ENCODE measurements at regions of chr1 and their contacts with region 1.

Region 1: GRCh38 chr1:27234049-27234882 is at the start of gene WDTC1:
- DNase-seq: peak; percentile 99
- ATAC-seq: peak; percentile 95
- H3K4me3 Mint-ChIP-seq: peak within 1 kb of the TSS; percentile 95
- H3K27ac Mint-ChIP-seq: peak within 1 kb of the TSS; percentile 93
- H3K4me1 Mint-ChIP-seq: peaks cover 27% of the 10 kb centered on the region
- H3K27me3 Mint-ChIP-seq: no peaks in the 10 kb centered on the region
- total RNA-seq, gene WDTC1: 19.3 to 21.9 TPM

Region 2: DNA sequence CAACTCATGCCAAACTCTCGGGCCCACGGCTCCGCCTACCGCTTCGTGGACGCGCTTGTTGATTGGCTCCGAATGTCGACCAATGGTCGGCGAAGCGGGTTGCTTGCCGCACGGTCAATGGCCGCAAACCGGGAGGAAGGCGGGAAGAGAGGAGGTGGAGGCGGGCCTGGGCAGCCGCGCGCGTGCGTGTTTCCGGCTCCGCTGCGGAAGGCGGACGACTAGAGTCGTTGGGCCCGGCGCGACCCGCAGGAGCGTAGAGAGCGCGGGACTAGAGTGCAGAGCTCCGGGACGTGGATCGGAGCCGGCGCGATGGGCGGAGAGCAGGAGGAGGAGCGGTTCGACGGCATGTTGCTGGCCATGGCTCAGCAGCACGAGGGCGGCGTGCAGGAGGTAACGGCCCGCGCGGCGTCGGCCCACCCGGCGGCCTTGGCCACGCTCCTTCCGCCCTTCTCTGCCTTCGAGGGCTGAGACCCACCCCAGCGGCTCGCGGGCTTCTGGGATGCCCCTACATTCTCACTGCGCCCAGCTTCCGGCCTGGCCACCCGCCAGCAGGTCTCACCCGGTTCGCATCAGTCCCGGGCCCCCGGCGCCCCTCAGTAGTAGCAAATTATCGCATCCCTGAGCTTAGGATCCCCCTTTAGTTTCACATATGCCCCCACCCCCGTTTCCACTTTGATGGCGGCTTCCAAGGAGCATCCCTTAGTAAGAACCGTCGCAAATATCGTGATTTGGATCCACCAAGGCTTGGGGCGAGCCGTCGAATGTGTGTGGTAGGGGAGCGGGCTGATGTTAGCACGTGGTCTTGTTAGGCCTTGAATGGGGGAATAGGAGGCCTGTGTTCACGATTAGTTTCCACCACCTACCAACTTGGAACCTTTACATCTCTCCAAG is 312.5 kb before region 1 on chr1 and contains the start of gene NUDC:
- CTCF ChIA-PET with region 1: no interaction called
- POLR2A ChIA-PET with region 1: no interaction called
- intact Hi-C with region 1: loop called in 1 of 2 experiments (anchors 1 kb)
- DNase-seq: peak; percentile 98
- ATAC-seq: peak; percentile 98
- H3K4me3 Mint-ChIP-seq: peak within 1 kb of the TSS; percentile 82
- H3K27ac Mint-ChIP-seq: peak within 1 kb of the TSS; percentile 90
- H3K4me1 Mint-ChIP-seq: peaks cover 38% of the 10 kb centered on the region
- H3K27me3 Mint-ChIP-seq: no peaks in the 10 kb centered on the region
- total RNA-seq, gene NUDC: 95.9 to 101 TPM

Region 3: DNA sequence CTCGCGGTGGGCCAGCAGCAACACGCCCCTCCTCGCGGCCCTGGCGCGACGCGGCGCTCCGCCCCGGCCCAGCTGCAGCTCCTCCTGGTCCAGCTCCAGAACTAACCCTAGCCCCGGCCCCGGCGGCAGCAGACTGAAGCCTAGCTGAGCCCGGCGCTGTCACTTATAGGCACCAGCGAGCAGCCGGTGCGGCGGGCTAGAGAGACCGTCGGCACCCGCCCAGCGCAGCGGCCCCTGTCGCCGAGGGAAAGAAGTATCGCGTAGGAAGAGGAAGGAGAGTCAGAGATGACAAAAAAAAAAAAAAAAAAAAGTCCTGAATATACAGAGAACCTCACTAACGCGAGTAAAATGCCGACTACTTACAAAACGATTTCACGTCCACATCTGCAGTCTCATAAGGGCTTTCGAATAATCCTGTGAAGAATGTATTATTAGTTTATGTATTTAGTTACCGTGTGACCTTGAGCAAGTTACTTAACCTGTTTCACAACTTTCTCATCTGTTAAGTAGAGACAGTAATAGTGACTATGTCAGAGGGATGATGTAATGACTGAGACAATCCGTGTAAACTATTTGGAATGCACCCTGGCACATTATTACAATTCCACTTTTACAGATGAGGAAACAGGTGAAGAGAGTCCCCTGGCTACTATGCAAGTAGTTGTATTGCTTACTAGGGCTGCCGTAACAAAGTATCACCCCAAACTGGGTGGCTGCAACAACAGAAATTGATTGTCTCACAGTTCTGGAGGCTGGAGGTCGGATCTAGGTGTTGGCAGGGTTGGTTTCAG is 79.1 kb before region 1 on chr1 and contains the start of gene SLC9A1:
- CTCF ChIA-PET with region 1: no interaction called
- POLR2A ChIA-PET with region 1: no interaction called
- intact Hi-C with region 1: loop called (anchors 1 to 2 kb)
- DNase-seq: peak; percentile 95
- ATAC-seq: peak; percentile 90
- H3K4me3 Mint-ChIP-seq: peak within 1 kb of the TSS; percentile 81
- H3K27ac Mint-ChIP-seq: peak within 1 kb of the TSS; percentile 97
- H3K4me1 Mint-ChIP-seq: peaks cover 42% of the 10 kb centered on the region
- H3K27me3 Mint-ChIP-seq: no peaks in the 10 kb centered on the region
- total RNA-seq, gene SLC9A1: 15.6 to 20.4 TPM

Region 4: DNA sequence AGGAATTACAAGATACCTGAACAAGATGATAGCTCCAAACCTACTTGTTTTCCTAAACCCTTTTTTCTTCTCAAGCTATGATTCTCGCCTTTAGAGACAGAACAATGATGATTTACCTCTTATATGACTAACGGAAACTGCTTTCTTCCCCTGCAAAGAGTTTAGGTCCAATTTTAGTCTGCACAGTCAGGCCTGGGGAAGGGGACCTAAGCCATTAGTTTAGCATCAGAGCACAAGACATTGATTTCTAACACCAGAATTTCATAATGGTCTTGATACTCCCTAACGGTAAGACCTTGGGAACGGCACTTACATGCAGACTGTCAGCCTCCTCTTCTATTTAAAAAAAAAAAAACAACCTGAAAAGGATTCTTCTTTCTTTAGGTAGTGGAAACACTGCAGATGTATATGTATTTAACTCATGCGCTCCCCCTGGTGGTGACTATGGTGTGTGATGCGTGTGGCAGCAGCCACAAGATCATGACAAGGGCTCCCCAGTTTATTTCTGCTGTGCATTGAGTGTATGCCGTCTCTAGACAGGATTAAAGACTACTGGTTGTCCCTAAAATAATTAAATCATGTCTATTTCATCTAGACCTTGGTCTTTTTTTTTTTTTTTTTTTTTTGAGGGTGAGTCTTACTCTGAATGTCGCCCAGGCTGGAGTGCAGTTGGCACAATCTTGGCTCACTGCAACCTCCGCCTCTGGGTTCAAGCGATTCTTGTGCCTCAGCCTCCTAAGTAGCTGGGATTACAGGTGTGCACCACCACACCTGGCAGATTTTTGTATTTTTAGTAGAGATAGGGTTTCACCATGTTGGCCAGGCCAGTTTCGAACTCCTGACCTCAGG is 50.4 kb after region 1 on chr1:
- CTCF ChIA-PET with region 1: interaction called, 9 read pairs
- POLR2A ChIA-PET with region 1: interaction called, 4 read pairs
- intact Hi-C with region 1: loop called (anchors 1 to 5 kb)
- DNase-seq: peak; percentile 95
- ATAC-seq: peak; percentile 93
- H3K4me3 Mint-ChIP-seq: no peak overlapping the region
- H3K27ac Mint-ChIP-seq: peak overlapping the region; percentile 37
- H3K4me1 Mint-ChIP-seq: peaks cover 2% of the 10 kb centered on the region
- H3K27me3 Mint-ChIP-seq: no peaks in the 10 kb centered on the region

Region 5: DNA sequence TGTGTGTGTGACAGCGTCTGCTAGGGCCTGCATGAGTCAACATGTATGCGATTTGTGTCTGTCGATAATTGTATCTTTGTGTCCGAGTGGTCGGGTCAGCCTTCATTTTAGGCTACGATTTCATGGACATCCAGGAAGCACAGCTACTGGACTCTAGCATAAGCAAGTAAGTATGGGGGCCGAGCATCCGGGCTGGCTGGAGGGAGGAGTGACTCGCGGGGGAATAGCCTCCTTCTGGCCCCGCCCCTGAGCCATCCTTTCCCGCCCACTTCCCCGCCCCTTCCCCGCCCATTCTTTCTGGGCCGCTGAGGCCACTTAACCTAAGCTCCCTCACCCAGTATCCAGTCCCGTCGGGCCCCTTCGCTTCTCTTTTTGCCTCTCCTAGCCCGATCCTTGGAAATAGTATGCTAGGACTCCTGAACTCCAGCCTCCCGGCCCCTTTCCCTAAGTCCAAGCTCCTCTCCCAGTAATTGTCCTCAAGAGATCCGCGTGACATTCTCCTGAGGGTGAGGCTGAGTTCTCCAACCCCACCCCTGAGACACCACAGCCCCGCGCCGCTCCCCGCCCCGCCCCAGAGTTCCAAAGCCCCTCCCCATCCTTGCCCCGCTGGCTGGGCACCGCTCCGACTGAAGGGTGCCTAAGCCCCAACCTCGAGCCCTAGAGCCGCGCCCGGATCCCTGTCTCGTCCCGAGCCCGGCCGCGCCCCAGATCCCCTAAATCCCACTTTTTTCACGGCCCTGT is 131.3 kb after region 1 on chr1:
- CTCF ChIA-PET with region 1: no interaction called
- POLR2A ChIA-PET with region 1: no interaction called
- intact Hi-C with region 1: loop called in 1 of 2 experiments (anchors 1 kb)
- DNase-seq: peak; percentile 92
- ATAC-seq: peak; percentile 68
- H3K4me3 Mint-ChIP-seq: peak overlapping the region; percentile 75
- H3K27ac Mint-ChIP-seq: peak overlapping the region; percentile 73
- H3K4me1 Mint-ChIP-seq: peaks cover 30% of the 10 kb centered on the region
- H3K27me3 Mint-ChIP-seq: no peaks in the 10 kb centered on the region

Region 6: GRCh38 chr1:27725374-27726173 is 491.3 kb after region 1 on chr1 and contains the start of gene FAM76A:
- CTCF ChIA-PET with region 1: no interaction called
- POLR2A ChIA-PET with region 1: interaction called, 5 read pairs
- intact Hi-C with region 1: loop called in 1 of 2 experiments (anchors 1 kb)
- DNase-seq: peak; percentile 100
- ATAC-seq: peak; percentile 95
- H3K4me3 Mint-ChIP-seq: peak within 1 kb of the TSS; percentile 78
- H3K27ac Mint-ChIP-seq: peak within 1 kb of the TSS; percentile 93
- H3K4me1 Mint-ChIP-seq: peaks cover 15% of the 10 kb centered on the region
- H3K27me3 Mint-ChIP-seq: no peaks in the 10 kb centered on the region
- total RNA-seq, gene FAM76A: 7.4 to 8.1 TPM